ENCODE measurements at regions of chr15 and their contacts with region 1.

Region 1: DNA sequence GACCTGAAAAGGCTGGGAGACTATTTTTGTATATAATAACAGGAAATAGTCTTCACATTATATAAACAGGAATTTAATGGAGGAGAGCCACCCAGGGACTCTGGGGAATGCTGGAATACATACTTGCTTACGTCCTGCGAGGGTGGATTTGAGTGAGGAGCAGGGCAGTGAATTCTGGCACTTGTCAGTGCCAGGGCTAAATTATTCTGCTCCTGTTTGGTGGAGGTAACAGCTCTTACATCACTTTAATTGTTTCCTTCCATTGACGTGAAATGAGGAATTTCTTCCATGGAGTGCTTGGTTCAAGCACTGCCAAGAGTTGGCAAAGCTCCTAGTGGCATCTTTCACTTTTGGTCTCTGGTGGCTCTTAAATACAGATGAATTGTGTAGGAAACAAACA is 94.1 kb upstream of the GOLGA8J start:
- DNase-seq: no peak
- ATAC-seq: no peak
- H3K4me3 ChIP-seq: no peak overlapping the region
- H3K27ac ChIP-seq: no peak overlapping the region
- H3K4me1 ChIP-seq: no peaks in the 10 kb centered on the region
- H3K27me3 ChIP-seq: no peaks in the 10 kb centered on the region
- CTCF ChIP-seq: no peak
- POLR2A ChIP-seq: no peak
- RAD21 ChIP-seq: no peak

Region 2: GRCh38 chr15:29601811-29602210 is 386.9 kb before region 1 on chr15:
- CTCF ChIA-PET with region 1: no interaction called
- POLR2A ChIA-PET with region 1: no interaction called
- RAD21 ChIA-PET with region 1: no interaction called
- intact Hi-C with region 1: no loop called
- DNase-seq: no peak
- ATAC-seq: no peak
- H3K4me3 ChIP-seq: no peak overlapping the region
- H3K27ac ChIP-seq: no peak overlapping the region
- H3K4me1 ChIP-seq: no peaks in the 10 kb centered on the region
- H3K27me3 ChIP-seq: no peaks in the 10 kb centered on the region
- CTCF ChIP-seq: no peak
- POLR2A ChIP-seq: no peak
- RAD21 ChIP-seq: no peak

Region 3: DNA sequence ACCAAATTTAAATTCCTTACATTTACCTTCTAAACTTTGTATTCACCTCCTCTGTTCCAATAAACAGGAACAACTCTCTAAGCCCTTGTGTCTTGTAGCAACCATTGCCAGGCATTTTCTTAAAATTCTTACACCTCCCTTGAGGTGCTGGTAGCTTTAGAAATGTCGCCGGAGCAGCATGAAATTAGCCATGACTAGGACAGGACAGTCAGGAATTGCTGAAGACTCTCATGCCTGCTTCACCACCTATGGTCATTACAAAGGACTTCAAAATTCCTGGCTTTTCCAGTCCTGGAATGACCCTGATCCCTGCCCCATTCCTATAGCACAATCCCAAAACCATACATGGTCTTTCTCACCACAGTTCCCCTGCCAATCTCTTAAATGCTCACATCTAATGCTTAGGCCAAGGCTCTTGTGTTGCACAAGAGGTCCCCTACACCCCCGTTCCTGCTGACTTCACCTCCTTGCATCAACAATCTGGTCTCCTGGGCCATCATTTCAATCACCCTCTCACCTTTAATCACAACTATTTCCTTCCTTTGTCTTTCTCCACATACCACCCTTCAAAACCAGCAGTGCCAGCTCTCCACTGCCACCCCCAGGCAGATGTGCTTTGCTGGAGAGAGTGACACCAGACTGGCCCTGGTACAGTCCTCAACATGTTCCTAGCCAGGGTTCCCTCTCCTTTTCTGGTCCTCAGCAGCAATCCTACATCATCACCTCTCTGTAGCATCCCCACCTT is 53.2 kb before region 1 on chr15:
- CTCF ChIA-PET with region 1: no interaction called
- POLR2A ChIA-PET with region 1: no interaction called
- RAD21 ChIA-PET with region 1: no interaction called
- intact Hi-C with region 1: loop called (anchors 10 kb)
- DNase-seq: no peak
- ATAC-seq: peak; percentile 89
- H3K4me3 ChIP-seq: no peak overlapping the region
- H3K27ac ChIP-seq: no peak overlapping the region
- H3K4me1 ChIP-seq: peaks cover 17 to 48% of the 10 kb centered on the region in 2 experiments; a peak in 3 of 4 replicates
- H3K27me3 ChIP-seq: no peaks in the 10 kb centered on the region
- CTCF ChIP-seq: peak; percentile 49 to 73 (median 67); a peak in 5 of 6 replicates
- POLR2A ChIP-seq: no peak
- RAD21 ChIP-seq: peak; percentile 63

Region 4: GRCh38 chr15:29970405-29970701 is 18.3 kb before region 1 on chr15:
- CTCF ChIA-PET with region 1: interaction called, 19 read pairs
- POLR2A ChIA-PET with region 1: no interaction called
- RAD21 ChIA-PET with region 1: no interaction called
- intact Hi-C with region 1: no loop called
- DNase-seq: no peak
- ATAC-seq: no peak
- H3K4me3 ChIP-seq: no peak overlapping the region
- H3K27ac ChIP-seq: no peak overlapping the region
- H3K4me1 ChIP-seq: no peaks in the 10 kb centered on the region
- H3K27me3 ChIP-seq: no peaks in the 10 kb centered on the region
- CTCF ChIP-seq: no peak
- POLR2A ChIP-seq: no peak
- RAD21 ChIP-seq: no peak

Measured in HCT116 (cell line).